H1 (cell line): ENCODE measurements at regions of chr19 and their contacts with region 1.

Region 1: GRCh38 chr19:39435499-39436349 is at the start of gene RPS16:
- DNase-seq: peak; percentile 95 to 97
- H3K4me3 ChIP-seq: peak within 1 kb of the TSS; percentile 97 to 99 (median 98)
- H3K27ac ChIP-seq: peak within 1 kb of the TSS; percentile 91
- H3K4me1 ChIP-seq: peaks cover 0 to 10% (median 2%) of the 10 kb centered on the region in 4 experiments; a peak in 6 of 7 replicates
- H3K27me3 ChIP-seq: no peaks in the 10 kb centered on the region; a peak in 1 of 7 replicates
- CTCF ChIP-seq: no peak
- EP300 ChIP-seq: no peak
- POLR2A ChIP-seq: peak; percentile 98 to 100
- RAD21 ChIP-seq: no peak
- total RNA-seq, gene RPS16: 2,433 and 2,482 TPM in 2 replicates

Region 2: DNA sequence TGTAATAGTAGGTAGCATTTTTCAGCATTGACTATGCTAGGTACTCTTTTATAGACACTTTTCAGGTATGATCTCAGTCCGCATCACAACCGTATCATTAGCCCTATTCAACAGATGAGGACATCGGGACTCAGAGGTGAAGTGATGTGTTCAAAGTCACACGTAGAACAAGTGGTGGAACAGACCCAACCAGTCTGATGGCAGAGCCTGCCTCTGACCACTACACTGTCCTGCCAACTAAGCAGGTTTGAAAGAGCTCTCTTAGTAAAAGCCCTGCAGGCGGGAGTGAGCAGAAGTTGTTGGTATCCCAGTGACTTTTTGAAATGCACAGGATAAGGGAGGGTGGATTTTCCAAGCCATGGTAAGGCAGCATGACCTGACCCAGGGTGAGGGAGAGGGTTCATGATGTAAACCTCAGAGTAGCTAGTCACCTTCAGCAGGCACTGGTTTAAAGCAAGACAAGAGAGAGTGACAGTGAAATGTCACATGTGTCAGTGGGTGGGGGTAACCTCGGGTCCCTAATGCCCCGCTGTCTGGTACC is 64.9 kb before region 1 on chr19:
- CTCF ChIA-PET with region 1: no interaction called
- POLR2A ChIA-PET with region 1: no interaction called
- DNase-seq: no peak
- H3K4me3 ChIP-seq: no peak overlapping the region
- H3K27ac ChIP-seq: no peak overlapping the region
- H3K4me1 ChIP-seq: no peaks in the 10 kb centered on the region
- H3K27me3 ChIP-seq: no peaks in the 10 kb centered on the region
- CTCF ChIP-seq: no peak
- EP300 ChIP-seq: no peak
- POLR2A ChIP-seq: no peak
- RAD21 ChIP-seq: no peak

Region 3: DNA sequence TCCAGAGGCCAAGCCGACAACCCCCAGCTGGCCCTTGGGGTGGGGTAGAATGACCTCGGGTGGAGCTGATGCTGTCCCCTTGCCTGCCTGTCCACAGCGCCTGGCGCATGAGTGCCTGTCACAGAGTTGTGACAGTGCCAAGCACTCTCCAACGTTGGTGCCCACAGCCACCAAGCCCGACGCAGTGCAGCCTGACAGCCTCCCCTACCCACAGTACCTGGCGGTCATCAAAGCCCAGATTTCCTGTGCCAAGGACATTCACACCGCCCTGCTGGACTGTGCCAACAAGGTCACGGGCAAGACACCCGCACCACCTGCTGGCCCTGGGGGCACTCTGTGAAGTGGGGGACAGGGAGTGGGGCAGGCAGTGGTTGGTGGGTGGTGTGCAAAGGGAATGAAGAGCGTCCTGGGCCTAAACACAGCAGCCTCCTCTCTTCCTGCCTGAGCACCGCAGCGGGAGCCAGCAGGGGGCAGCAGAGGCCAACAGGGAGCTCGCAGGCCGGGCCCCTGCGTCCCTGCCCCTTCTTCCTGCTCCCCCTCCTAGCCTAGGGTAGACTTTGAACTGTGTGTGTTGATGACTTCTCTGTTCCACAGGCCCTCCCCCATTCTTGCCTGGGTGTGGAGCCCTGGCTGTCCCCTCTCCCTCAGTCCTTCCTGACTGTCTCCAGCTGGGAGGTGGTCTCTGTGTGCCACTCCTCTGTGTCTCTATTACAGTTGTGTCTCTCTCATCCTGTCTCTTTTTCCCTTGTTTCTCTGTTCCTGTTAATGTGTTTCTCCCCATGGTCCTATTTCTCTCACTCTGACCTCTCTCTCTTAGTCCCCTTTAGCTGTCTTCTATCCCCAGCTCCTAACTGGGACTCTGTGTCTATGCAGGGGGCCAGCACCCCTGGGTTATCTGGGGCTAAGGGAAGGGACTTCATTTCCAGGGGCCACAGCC is 38.1 kb before region 1 on chr19:
- CTCF ChIA-PET with region 1: interaction called, 4 read pairs
- POLR2A ChIA-PET with region 1: interaction called, 182 read pairs
- DNase-seq: peak in 1 of 2 experiments; percentile 95
- H3K4me3 ChIP-seq: no peak overlapping the region
- H3K27ac ChIP-seq: no peak overlapping the region
- H3K4me1 ChIP-seq: peaks cover 6 to 21% (median 13%) of the 10 kb centered on the region in 4 experiments
- H3K27me3 ChIP-seq: no peaks in the 10 kb centered on the region
- CTCF ChIP-seq: peak; percentile 92 to 98 (median 98)
- EP300 ChIP-seq: no peak
- POLR2A ChIP-seq: no peak; a peak in 1 of 3 replicates
- RAD21 ChIP-seq: peak; percentile 92 to 96

Region 4: DNA sequence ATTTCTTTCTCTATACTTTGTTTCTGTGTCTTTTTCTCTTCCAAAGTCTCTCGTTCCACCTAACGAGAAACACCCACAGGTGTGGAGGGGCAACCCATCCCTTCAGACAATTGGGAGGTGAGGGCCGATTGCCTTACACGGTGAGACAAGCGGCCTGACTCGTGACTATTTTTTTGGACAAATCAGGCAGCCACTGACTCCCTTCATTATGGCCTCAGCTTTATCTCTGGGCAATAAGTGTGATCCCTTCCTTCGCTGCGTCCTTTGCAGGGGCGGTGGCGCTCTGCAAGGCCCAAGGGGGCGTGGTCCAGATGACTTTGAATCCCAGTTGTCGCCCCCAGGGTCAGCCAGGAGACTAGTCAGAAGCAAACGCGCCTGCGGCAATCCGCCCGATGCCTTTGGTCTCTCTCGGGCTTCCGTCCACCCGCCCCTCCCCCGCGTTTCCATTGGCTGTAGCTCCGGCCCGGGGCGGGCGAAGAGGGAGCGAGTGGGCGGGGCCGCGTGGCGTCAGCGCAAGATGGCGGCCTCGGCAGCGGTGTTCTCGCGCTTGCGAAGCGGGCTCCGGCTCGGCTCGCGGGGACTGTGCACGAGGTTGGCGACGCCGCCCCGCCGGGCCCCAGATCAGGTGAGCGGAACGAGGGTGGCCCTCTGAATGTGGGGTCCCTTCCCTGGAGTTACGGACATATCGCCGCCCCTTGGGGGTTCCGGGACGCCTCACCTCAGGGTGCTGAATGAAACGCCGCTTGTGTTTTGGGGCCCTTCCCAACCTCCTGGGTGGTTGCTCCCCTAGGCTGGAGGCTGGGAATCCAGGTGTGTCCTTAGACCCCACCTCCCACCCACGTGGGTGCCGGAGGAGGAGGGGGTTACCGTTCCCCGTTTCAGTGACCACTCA is 44.9 kb after region 1 on chr19 and contains the start of gene TIMM50:
- CTCF ChIA-PET with region 1: interaction called, 3 read pairs
- POLR2A ChIA-PET with region 1: interaction called, 20 read pairs
- DNase-seq: peak; percentile 97 to 98
- H3K4me3 ChIP-seq: peak within 1 kb of the TSS; percentile 89 to 98 (median 95)
- H3K27ac ChIP-seq: peak within 1 kb of the TSS; percentile 93
- H3K4me1 ChIP-seq: peaks cover 0 to 10% (median 4%) of the 10 kb centered on the region in 4 experiments; a peak in 5 of 7 replicates
- H3K27me3 ChIP-seq: no peaks in the 10 kb centered on the region
- CTCF ChIP-seq: no peak
- EP300 ChIP-seq: no peak; a peak in 1 of 3 replicates
- POLR2A ChIP-seq: peak; percentile 74 to 84
- RAD21 ChIP-seq: no peak; a peak in 1 of 4 replicates
- total RNA-seq, gene TIMM50: 153 and 155 TPM in 2 replicates

Region 5: GRCh38 chr19:39514840-39515550 is 79.3 kb after region 1 on chr19 and contains the start of gene SELENOV:
- CTCF ChIA-PET with region 1: no interaction called
- POLR2A ChIA-PET with region 1: interaction called, 24 read pairs
- DNase-seq: peak in 1 of 2 experiments; percentile 91
- H3K4me3 ChIP-seq: peak within 1 kb of the TSS; percentile 76 to 95 (median 90)
- H3K27ac ChIP-seq: peak within 1 kb of the TSS; percentile 61; the same call in 1 of the 2 replicates
- H3K4me1 ChIP-seq: peaks cover 0 to 10% (median 5%) of the 10 kb centered on the region in 4 experiments; a peak in 6 of 7 replicates
- H3K27me3 ChIP-seq: peaks cover 0 to 2% (median 0%) of the 10 kb centered on the region in 4 experiments; a peak in 3 of 7 replicates
- CTCF ChIP-seq: peak; percentile 24 to 41 (median 34)
- EP300 ChIP-seq: peak in 1 of 2 experiments; percentile 66; a peak in 1 of 3 replicates
- POLR2A ChIP-seq: peak in 1 of 2 experiments; percentile 60; a peak in 2 of 3 replicates
- RAD21 ChIP-seq: peak; percentile 26 to 43; a peak in 3 of 4 replicates
- total RNA-seq, gene SELENOV: 8.4 and 11.0 TPM in 2 replicates

Region 6: GRCh38 chr19:39532233-39533002 is 96.7 kb after region 1 on chr19 and contains the start of gene EID2B:
- CTCF ChIA-PET with region 1: no interaction called
- POLR2A ChIA-PET with region 1: interaction called, 12 read pairs
- DNase-seq: peak; percentile 94 to 96
- H3K4me3 ChIP-seq: peak within 1 kb of the TSS; percentile 55 to 93 (median 78)
- H3K27ac ChIP-seq: no peak within 1 kb of the TSS
- H3K4me1 ChIP-seq: no peaks in the 10 kb centered on the region
- H3K27me3 ChIP-seq: peaks cover 0 to 3% (median 0%) of the 10 kb centered on the region in 4 experiments; a peak in 1 of 7 replicates
- CTCF ChIP-seq: peak; percentile 94 to 99 (median 99)
- EP300 ChIP-seq: no peak
- POLR2A ChIP-seq: peak in 1 of 2 experiments; percentile 51; a peak in 1 of 3 replicates
- RAD21 ChIP-seq: peak; percentile 97 to 99
- total RNA-seq, gene EID2B: 2.4 and 3.4 TPM in 2 replicates